ENCODE measurements at regions of chr12 and their contacts with region 1.

Region 1: DNA sequence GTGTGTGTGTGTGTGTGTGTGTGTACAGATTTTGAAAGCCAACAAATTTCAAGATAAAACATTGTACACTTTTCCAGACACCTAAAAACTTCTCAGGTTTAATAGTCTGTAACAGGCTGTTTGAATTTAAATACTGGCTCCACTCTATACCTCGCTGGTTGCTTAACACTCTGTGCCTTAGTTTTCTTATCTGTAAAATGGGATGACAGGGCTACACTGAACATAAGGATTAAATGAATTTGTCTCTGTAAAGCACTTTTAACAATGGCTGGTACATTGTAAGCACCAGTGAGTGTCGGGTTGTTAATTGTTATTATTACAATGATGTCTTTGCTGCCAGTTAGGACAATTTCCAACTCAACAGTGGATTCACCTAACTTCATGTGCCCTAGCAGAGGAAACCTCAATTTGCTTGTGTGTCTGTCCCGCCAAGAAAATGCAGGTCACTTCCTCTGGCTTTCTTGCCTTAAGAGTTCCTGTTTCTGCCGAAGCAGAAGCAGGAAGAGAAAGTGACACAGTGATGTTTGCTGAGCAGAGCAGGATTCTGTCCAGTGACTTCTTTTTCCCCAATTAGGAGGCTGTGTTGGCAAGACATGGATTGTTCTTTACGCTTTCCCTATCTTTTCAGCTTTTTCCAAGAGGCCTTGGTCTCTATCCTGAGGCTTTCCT is 154.0 kb upstream of the ATP2B1 start:
- DNase-seq: peak; percentile 13 to 67 (median 63)
- H3K4me3 ChIP-seq: peak overlapping the region; percentile 38
- H3K4me3 Mint-ChIP-seq: peak overlapping the region; percentile 70 to 89 (median 79)
- H3K27ac ChIP-seq: peak overlapping the region; percentile 78
- H3K27ac Mint-ChIP-seq: peak overlapping the region; percentile 90 to 100 (median 98)
- H3K4me1 ChIP-seq: peaks cover 34% of the 10 kb centered on the region
- H3K4me1 Mint-ChIP-seq: peaks cover 67 to 79% (median 74%) of the 10 kb centered on the region in 3 donors
- H3K27me3 ChIP-seq: no peaks in the 10 kb centered on the region
- H3K27me3 Mint-ChIP-seq: no peaks in the 10 kb centered on the region

Region 2: GRCh38 chr12:89882050-89882449 is 19.4 kb after region 1 on chr12:
- CTCF ChIA-PET with region 1: interaction called, 12 read pairs
- POLR2A ChIA-PET with region 1: interaction called, 14 read pairs
- DNase-seq: peak in 1 of 5 donors; percentile 14
- H3K4me3 ChIP-seq: no peak overlapping the region
- H3K4me3 Mint-ChIP-seq: peak overlapping the region in 6 of 7 donors; percentile 5 to 83 (median 68)
- H3K27ac ChIP-seq: no peak overlapping the region
- H3K27ac Mint-ChIP-seq: peak overlapping the region; percentile 78 to 98 (median 94)
- H3K4me1 ChIP-seq: peaks cover 42% of the 10 kb centered on the region
- H3K4me1 Mint-ChIP-seq: peaks cover 56 to 71% (median 69%) of the 10 kb centered on the region in 3 donors
- H3K27me3 ChIP-seq: no peaks in the 10 kb centered on the region
- H3K27me3 Mint-ChIP-seq: no peaks in the 10 kb centered on the region